Motor neuron (in vitro differentiated cells): ENCODE measurements at regions of chr22 and their contacts with region 1.

Region 1: DNA sequence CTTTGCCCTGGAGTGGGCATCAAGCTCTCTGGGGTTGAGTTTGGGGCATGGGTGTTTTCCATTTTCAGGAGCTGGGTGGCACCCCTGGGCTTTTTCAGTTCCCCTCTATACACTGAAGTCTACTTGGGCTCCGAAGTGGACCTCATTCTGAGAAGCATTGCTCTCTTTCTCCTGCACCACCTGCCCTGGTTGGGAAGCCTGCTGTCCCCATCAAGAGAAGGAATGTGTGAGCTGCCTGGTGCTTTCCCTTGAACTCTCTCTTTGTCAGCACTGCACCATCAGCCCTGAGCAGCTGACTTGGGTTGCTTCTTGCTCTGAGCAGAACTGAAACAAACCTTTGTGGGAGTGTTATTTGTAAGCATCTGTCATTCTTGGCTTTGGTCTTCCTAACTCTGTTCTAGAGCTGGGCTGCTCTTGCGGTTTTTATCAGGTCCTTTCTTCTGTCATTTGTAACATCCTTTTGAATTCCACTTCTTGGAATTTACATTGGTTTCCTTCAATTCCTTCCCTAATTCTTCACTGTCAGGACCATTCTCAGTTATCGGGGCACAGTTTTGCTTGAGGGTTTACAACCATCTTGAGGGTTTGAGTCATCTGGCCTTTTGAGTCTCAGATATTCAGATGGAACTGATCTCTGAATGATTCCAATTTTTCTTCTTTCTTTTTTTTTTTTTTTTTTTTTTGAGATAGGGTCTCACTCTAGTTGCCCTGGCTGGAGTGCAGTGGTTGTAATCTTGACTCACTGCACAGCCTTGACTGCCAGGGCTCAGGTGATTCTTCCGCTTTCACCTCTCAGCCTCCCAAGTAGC is 20.5 kb downstream of the UBE2L3 start:
- ATAC-seq: peak in 3 of 8 experiments; percentile 17 to 43 (median 31)
- H3K4me3 ChIP-seq: no peak overlapping the region
- H3K27ac ChIP-seq: peak overlapping the region in 1 of 2 donors; percentile 45
- H3K4me1 ChIP-seq: no peaks in the 10 kb centered on the region

Region 2: DNA sequence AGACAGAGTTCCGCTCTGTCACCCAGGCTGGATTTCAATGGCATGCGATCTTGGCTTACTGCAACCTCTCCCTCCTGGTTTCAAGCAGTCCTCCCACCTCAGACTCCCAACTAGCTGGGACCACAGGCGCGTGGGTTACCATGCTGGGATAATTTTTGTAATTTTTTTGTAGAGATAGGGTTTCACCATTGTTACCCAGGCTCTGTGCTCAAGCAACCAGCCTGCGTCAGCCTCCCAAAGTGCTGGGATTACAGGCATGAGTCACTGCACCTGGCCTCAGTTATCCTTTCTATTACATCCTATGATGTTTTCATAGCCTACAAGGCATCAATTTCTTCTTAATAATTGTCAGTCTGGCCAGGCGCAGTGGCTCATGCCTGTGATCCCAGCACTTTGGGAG is 505.8 kb before region 1 on chr22:
- in situ Hi-C with region 1: no loop called
- ATAC-seq: no peak
- H3K4me3 ChIP-seq: no peak overlapping the region
- H3K27ac ChIP-seq: no peak overlapping the region
- H3K4me1 ChIP-seq: no peaks in the 10 kb centered on the region

Region 3: DNA sequence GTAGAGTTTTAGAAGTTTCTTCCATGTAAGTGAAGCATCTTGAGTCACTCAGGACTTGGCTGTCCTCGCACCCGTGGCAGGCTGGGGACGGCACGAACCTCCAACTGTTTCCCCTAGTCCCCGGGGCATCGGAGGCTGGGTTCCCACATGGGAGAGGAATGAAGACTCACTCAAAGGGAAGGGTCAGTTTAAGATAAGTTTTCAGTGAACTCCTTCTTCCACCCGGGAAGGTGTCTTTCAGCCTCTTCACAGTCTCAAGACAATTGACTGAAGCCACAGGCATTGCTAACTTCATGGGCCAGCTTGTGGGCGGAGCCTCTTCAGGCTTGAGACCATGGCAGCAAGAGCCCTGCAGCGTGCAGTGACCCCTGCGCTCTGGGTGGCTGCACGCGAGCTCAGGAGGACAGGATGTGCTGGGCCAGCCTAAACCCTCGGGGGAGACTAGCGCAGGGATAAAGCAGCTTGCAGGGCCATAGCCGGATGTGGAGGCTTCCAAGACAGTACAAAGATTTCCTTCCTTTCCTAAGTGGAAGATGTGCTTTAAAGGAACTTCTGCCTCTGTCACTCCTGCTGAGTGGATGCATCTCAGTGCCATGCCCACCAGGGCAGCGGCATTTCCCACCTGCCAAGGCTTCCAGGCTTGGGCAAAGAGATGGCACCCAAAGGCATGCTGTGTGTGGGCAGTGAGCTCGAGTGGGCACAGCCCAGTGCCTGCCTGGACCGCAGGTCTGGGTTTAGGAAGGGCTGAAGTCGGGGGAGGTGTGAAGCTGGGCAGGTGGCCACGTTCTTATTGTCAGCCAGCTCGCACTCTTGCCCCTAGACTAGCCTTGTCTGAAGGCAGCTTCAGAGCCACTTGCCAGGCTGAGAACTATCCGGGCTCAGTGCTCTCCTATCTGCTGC is 110.7 kb after region 1 on chr22:
- in situ Hi-C with region 1: loop called in 1 of 9 experiments (anchors 25 kb)
- ATAC-seq: peak in 5 of 8 experiments; percentile 24 to 56 (median 31)
- H3K4me3 ChIP-seq: no peak overlapping the region
- H3K27ac ChIP-seq: peak overlapping the region; percentile 28 to 61
- H3K4me1 ChIP-seq: peaks cover 0 to 3% of the 10 kb centered on the region in 2 donors

Region 4: DNA sequence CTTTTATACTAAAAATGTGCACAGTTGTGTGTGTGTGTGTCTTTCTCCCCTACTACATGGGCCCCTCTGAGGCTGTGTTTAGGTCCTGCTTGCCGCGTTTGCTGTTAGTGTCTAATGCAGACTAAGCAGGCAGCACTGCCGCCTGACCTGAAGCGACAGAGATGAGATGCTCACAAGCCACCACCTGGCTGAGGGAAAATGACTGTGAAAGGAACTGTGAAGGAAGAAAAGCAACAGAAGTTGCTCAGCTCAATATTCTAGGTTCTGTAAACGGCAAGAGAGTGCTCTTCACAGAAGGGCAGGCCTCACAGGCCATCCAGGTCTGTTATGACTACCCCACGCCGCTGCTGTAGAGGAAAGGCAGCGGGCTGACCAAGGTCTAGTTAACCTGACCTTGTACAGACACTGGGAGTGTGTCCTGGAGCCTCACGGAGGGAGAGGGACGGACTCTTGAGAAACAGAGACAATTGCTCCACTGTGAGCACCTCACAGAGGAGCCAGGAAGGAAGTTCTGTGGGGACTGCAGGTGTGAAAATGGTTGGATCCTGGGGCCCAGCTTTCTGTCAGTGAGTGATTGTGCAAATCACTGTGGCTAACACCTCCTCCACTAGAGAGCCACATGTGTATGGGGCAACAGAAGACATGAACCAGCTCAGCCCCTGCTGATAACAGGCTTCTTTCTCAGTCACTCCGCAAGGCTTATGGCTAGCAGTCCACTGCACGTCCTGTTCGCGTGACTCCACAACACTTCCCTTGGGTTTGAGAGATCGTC is 178.9 kb after region 1 on chr22:
- in situ Hi-C with region 1: no loop called
- ATAC-seq: no peak
- H3K4me3 ChIP-seq: no peak overlapping the region
- H3K27ac ChIP-seq: peak overlapping the region in 1 of 2 donors; percentile 30
- H3K4me1 ChIP-seq: no peaks in the 10 kb centered on the region